ENCODE measurements at regions of chr19 and their contacts with region 1.

Region 1: GRCh38 chr19:57410877-57411671 is at the start of gene ZNF17:
- DNase-seq: peak; percentile 87
- H3K4me3 Mint-ChIP-seq: peak within 1 kb of the TSS; percentile 95
- H3K27ac Mint-ChIP-seq: peak within 1 kb of the TSS; percentile 81
- H3K4me1 Mint-ChIP-seq: peaks cover 18% of the 10 kb centered on the region
- H3K27me3 Mint-ChIP-seq: no peaks in the 10 kb centered on the region
- total RNA-seq, gene ZNF17: 7.9 and 11.0 TPM in 2 replicates

Region 2: GRCh38 chr19:57016076-57016475 is 395.0 kb before region 1 on chr19:
- intact Hi-C with region 1: no loop called
- DNase-seq: no peak
- H3K4me3 Mint-ChIP-seq: no peak overlapping the region
- H3K27ac Mint-ChIP-seq: no peak overlapping the region
- H3K4me1 Mint-ChIP-seq: no peaks in the 10 kb centered on the region
- H3K27me3 Mint-ChIP-seq: no peaks in the 10 kb centered on the region

Region 3: DNA sequence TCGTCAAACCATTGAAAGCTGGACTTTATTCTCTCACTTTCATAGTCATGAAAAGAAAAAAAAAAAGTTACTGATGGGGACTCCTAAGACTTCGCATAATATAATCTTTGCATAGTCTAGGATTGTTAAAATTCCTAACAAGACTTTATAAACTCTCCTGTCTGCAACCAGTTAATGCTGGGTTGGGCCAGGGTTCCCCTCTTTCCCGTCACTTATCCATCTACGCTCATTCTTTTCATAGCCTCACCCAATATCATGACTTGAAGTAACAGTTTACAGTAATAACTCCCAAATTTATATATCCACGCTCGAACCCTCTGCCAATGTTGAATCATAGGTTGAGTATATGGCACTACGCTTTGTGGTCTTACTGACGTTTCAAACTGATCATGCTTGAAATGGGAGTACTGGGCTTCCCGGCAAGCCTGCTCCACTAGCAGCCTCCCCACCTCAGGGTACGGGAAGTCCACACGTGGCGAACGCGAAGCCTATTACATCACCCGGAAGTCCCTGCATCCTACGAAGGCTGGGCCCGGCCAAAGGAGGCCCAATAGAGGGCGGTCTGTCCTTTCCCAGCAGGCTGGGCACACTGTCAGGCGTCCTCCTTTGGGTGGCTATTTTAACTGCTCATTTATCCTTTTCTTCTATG is 131.5 kb before region 1 on chr19:
- intact Hi-C with region 1: loop called (anchors 1 kb)
- DNase-seq: peak; percentile 75
- H3K4me3 Mint-ChIP-seq: no peak overlapping the region
- H3K27ac Mint-ChIP-seq: no peak overlapping the region
- H3K4me1 Mint-ChIP-seq: peaks cover 23% of the 10 kb centered on the region
- H3K27me3 Mint-ChIP-seq: peaks cover 2% of the 10 kb centered on the region

Region 4: GRCh38 chr19:57362997-57363705 is 47.9 kb before region 1 on chr19 and contains the starts of genes TRAPPC2B and ZNF547:
- intact Hi-C with region 1: loop called (anchors 1 kb)
- DNase-seq: peak; percentile 98
- H3K4me3 Mint-ChIP-seq: peak within 1 kb of the TSS; percentile 89
- H3K27ac Mint-ChIP-seq: peak within 1 kb of the TSS; percentile 97
- H3K4me1 Mint-ChIP-seq: peaks cover 17% of the 10 kb centered on the region
- H3K27me3 Mint-ChIP-seq: no peaks in the 10 kb centered on the region
- total RNA-seq, gene TRAPPC2B: 3.8 and 4.7 TPM in 2 replicates
- total RNA-seq, gene ZNF547: 0.69 and 0.93 TPM in 2 replicates

Region 5: DNA sequence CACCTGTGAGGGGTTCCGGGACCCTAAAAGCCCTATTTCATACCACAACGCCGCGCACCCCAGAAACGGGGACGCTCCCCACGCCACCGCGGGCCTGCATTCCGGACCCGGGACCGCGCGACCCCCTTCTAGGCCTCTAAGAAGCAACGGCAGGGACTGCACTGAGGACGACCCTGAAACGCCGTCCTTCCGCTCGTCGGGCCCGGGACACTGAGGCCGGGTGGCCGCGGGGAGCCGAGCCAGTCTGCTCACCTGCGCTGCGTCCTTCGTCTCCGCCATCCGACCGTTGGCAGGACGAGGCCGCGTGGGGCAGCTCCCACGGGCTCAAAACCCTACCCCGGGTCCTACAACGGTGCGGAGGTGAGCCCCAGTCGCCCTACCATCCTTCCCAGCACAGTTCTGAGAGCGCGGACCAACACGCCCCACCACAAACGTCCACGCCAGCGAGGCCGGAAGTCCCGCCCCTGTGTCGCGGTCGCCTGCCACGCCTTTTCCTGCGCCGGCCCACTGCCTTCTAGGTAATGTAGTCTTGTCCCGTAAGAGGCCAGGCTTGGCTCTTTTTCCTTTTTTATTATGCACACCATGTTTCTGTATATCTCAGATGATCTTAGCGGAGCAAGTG is 148.4 kb after region 1 on chr19 and contains the start of gene ZNF550:
- intact Hi-C with region 1: loop called (anchors 1 kb)
- DNase-seq: peak; percentile 84
- H3K4me3 Mint-ChIP-seq: peak within 1 kb of the TSS; percentile 98
- H3K27ac Mint-ChIP-seq: peak within 1 kb of the TSS; percentile 88
- H3K4me1 Mint-ChIP-seq: peaks cover 28% of the 10 kb centered on the region
- H3K27me3 Mint-ChIP-seq: no peaks in the 10 kb centered on the region
- total RNA-seq, gene ZNF550: 7.2 and 7.5 TPM in 2 replicates

Region 6: DNA sequence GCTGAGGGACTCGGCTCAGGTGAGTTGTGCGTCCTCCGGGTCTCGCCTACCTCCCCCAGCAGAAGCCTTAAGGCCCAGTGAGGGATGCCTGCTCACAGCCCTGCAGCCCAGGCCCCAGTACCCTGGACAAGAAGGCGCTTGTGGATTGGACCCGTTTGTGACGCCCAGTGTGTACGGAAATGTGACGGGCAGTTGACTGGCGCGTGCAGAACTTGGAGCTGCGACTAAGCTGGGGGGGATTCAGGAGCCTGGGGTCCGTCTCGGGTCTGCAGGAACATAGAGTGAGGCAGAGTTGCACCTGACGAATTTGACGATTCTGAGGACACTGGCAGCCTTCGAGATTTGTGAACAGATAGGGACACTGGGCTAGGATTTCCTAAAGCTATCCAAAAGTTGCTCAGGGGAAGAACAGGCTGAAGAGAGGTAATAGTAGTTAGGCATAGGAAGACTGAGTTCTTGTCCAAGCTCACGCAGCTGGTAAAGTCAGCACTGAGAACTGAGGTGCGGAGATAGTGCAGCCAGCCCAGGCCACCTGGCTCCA is 271.2 kb after region 1 on chr19:
- intact Hi-C with region 1: loop called (anchors 1 kb)
- DNase-seq: no peak
- H3K4me3 Mint-ChIP-seq: peak overlapping the region; percentile 96
- H3K27ac Mint-ChIP-seq: peak overlapping the region; percentile 92
- H3K4me1 Mint-ChIP-seq: peaks cover 22% of the 10 kb centered on the region
- H3K27me3 Mint-ChIP-seq: no peaks in the 10 kb centered on the region

Region 7: GRCh38 chr19:57819475-57820148 is 408.5 kb after region 1 on chr19:
- intact Hi-C with region 1: loop called (anchors 1 kb)
- DNase-seq: peak; percentile 76
- H3K4me3 Mint-ChIP-seq: peak overlapping the region; percentile 99
- H3K27ac Mint-ChIP-seq: peak overlapping the region; percentile 98
- H3K4me1 Mint-ChIP-seq: peaks cover 50% of the 10 kb centered on the region
- H3K27me3 Mint-ChIP-seq: no peaks in the 10 kb centered on the region

Region 8: DNA sequence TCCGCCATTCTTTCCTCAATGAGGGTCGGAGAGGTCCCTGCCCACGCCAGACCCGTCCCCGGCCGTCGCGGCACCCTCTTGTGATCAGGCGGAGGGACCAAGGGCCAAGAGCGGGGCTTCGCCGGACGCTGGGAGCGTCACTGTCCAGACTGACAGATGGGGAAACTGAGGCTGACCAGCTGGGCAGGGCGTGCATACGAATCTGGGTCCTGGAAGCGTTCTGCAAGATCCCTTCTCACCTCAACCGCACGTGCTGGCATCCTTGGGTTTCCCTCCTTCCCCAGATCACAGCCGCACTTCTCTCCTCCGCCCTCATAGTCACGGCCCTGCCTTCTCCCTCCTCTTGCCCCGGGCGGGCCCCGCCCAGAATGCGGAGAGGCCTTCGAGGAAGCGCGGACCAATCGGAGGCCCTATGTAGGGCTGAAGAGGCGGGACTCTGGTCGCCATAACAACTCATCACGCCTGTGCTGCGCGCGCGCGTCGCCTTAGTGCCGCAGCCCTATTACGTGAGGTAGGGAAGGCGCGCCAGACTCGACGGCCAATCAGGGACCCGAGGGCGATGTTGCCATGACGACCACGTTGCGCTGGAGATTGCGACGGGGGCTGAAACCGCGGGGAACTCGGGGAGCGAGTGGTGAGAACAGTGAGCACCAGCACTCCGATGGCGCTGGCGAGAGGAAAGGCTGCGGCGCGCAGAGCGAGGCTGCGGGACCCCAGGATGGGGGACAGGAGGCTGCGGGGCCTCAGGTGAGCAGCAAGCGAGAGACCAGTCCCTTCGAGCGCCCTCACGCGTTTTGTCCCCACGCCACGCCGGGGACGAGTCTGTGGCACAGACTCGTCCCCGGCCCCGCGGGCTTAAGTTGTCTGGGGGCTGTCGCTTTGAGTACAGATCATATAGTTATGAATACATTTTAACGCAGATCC is 990.1 kb after region 1 on chr19:
- intact Hi-C with region 1: loop called (anchors 2 kb)
- DNase-seq: peak; percentile 99
- H3K4me3 Mint-ChIP-seq: peak overlapping the region; percentile 86
- H3K27ac Mint-ChIP-seq: peak overlapping the region; percentile 88
- H3K4me1 Mint-ChIP-seq: peaks cover 24% of the 10 kb centered on the region
- H3K27me3 Mint-ChIP-seq: peaks cover 5% of the 10 kb centered on the region

Measured in activated T-helper 1 cell treated with anti-CD3 and anti-CD28 coated beads, Interleukin-12 subunit alpha, Interleukin-12 subunit beta, Interleukin-2, Interleukin-4 antibody, amounts not matched to agents 30 ng/mL and 10 ng/mL and 1 ng/mL, durations not matched to agents 14 hours and 24 hours and 36 hours (primary cell).